ENCODE measurements at regions of chr11 and their contacts with region 1.

Region 1: GRCh38 chr11:83836883-83837654 is 550.9 kb upstream of the CCDC90B start:
- DNase-seq: peak in 1 of 2 experiments; percentile 26
- H3K4me3 ChIP-seq: no peak overlapping the region
- H3K27ac ChIP-seq: no peak overlapping the region
- H3K4me1 ChIP-seq: no peaks in the 10 kb centered on the region
- H3K27me3 ChIP-seq: no peaks in the 10 kb centered on the region; the same call in 1 of the 2 replicates
- CTCF ChIP-seq: peak; percentile 81

Region 2: DNA sequence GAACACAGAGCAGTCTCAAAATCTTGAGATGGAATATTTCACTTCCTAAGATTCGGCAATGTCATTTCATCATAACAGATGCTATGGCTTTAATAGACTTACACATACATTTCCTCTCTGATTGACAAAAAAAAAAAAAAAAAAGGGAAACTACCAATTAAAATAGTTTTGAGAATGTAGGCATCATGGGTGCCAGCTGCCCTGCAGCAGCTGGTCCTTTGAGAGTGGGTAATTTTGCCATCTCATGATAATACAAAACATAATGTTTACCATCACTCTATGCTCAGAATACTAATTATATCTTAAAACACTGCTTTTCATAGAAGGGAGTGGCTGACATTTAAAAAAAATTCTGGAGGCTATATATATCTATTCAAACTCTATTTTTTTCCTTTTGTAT is 224.7 kb after region 1 on chr11:
- CTCF ChIA-PET with region 1: no interaction called
- POLR2A ChIA-PET with region 1: no interaction called
- intact Hi-C with region 1: no loop called
- DNase-seq: no peak
- H3K4me3 ChIP-seq: no peak overlapping the region
- H3K27ac ChIP-seq: no peak overlapping the region
- H3K4me1 ChIP-seq: no peaks in the 10 kb centered on the region
- H3K27me3 ChIP-seq: no peaks in the 10 kb centered on the region
- CTCF ChIP-seq: no peak

Region 3: DNA sequence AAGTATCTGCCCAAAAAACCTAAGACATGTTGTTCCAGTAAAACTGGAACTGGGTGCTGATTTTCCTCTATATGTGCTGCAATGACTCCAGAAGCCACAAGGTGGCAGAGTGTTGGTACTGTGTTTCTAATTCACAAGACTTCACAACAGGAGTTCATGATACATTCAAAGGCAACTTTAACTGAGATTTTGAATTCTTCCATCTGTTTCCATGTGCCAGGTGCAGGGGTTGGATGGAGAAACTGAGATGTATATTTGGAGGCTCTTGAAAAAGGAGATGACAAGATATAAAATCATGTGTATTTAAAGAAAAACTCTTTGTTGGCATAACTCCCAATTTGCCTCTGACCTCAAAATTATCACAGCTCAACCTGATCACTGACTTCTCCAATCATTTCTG is 547.7 kb after region 1 on chr11:
- CTCF ChIA-PET with region 1: no interaction called
- POLR2A ChIA-PET with region 1: no interaction called
- intact Hi-C with region 1: loop called (anchors 5 kb)
- DNase-seq: peak in 1 of 2 experiments; percentile 27
- H3K4me3 ChIP-seq: no peak overlapping the region
- H3K27ac ChIP-seq: no peak overlapping the region
- H3K4me1 ChIP-seq: no peaks in the 10 kb centered on the region
- H3K27me3 ChIP-seq: no peaks in the 10 kb centered on the region
- CTCF ChIP-seq: peak; percentile 84

Region 4: GRCh38 chr11:84524422-84525051 is 687.5 kb after region 1 on chr11:
- CTCF ChIA-PET with region 1: interaction called, 6 read pairs
- POLR2A ChIA-PET with region 1: no interaction called
- intact Hi-C with region 1: loop called (anchors 10 kb)
- DNase-seq: no peak
- H3K4me3 ChIP-seq: no peak overlapping the region
- H3K27ac ChIP-seq: no peak overlapping the region
- H3K4me1 ChIP-seq: no peaks in the 10 kb centered on the region
- H3K27me3 ChIP-seq: no peaks in the 10 kb centered on the region; the same call in 1 of the 2 replicates
- CTCF ChIP-seq: peak; percentile 68

Region 5: DNA sequence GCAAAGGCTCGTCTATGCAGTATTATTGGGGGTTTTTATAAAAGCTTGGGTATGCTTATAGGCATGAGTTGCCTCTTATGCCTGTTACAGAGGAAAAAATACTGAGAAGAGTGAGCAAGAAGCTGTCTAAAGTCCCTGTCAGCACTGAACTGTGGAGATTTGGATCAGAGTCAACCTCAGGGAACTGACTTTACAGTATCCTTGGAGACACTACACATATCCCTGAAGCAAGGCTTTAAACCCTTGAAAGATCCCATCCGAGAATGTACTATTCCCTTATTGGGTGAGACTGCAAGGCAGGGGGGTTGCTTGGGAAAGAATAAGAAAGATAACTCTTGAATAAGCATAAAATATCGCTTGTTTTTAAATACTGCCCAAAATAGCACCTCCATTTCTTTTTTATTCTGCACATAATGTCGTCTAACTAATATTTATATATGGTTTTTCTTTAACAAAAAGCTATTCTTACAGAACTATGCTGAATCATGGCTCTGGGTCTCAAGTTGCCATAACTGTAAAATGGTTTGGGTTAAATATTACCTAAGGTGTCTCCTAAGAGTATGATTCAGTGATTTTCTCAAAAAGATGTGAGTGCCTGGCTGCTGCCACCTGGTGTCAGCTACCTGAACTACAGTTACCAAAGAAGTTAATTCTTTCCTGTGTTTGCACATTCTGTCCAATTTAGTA is 727.3 kb after region 1 on chr11:
- CTCF ChIA-PET with region 1: no interaction called
- POLR2A ChIA-PET with region 1: no interaction called
- intact Hi-C with region 1: loop called (anchors 2 kb)
- DNase-seq: peak in 1 of 2 experiments; percentile 15
- H3K4me3 ChIP-seq: no peak overlapping the region
- H3K27ac ChIP-seq: no peak overlapping the region
- H3K4me1 ChIP-seq: no peaks in the 10 kb centered on the region
- H3K27me3 ChIP-seq: no peaks in the 10 kb centered on the region
- CTCF ChIP-seq: peak; percentile 94

Measured in PC-9 (cell line).